Endothelial cell of umbilical vein (primary cell): ENCODE measurements at regions of chr7 and their contacts with region 1.

Region 1: GRCh38 chr7:1044191-1045068 is at the start of gene GPR146:
- DNase-seq: peak; percentile 95
- H3K4me3 ChIP-seq: peak within 1 kb of the TSS; percentile 22 to 67 (median 57)
- H3K27ac ChIP-seq: peak within 1 kb of the TSS; percentile 54
- H3K4me1 ChIP-seq: peaks cover 24% of the 10 kb centered on the region
- H3K27me3 ChIP-seq: no peaks in the 10 kb centered on the region
- CTCF ChIP-seq: peak; percentile 58 to 82
- POLR2A ChIP-seq: peak; percentile 33
- total RNA-seq, gene GPR146: 11.7 and 18.5 TPM in 2 replicates

Region 2: GRCh38 chr7:1028031-1028770 is 16.2 kb before region 1 on chr7:
- CTCF ChIA-PET with region 1: interaction called, 11 read pairs
- POLR2A ChIA-PET with region 1: interaction called, 3 read pairs
- dilution Hi-C with region 1: no loop called
- intact Hi-C with region 1: no loop called
- DNase-seq: peak; percentile 88
- H3K4me3 ChIP-seq: peak overlapping the region; percentile 5 to 80 (median 51)
- H3K27ac ChIP-seq: peak overlapping the region; percentile 31
- H3K4me1 ChIP-seq: peaks cover 8% of the 10 kb centered on the region
- H3K27me3 ChIP-seq: no peaks in the 10 kb centered on the region
- CTCF ChIP-seq: no peak
- POLR2A ChIP-seq: peak; percentile 34